ENCODE measurements at regions of chr17 and their contacts with region 1.

Region 1: DNA sequence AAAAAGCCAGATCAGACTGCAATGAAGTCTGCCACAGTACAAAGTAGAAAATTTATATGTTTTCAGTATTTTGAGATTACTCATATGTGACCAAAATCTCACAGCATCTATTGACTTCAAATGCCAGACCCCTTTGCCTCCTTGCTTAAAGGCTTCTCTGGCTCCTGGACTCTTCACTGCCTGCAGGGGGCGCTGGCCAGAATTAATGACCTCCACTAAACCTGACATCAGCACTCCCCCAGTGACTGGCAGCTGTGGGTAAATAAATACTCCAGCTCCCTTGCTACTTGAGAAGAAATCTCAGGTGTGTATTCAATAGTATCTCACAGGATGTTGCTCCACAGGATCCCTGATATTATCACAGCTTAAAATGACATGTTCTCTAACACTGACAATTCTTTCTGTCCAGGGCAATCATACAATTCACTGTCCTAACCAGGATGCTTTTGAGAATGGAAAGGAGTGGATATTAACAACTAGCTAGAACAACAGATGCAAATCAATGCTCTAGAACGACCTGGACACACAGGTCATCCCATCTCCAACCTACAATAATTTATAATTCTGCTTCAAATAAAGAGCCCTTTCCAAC is 4.0 kb downstream of the BECN1 start:
- DNase-seq: peak; percentile 26 to 74 (median 63)
- ATAC-seq: peak; percentile 24
- H3K4me3 ChIP-seq: no peak overlapping the region
- H3K4me3 Mint-ChIP-seq: no peak overlapping the region
- H3K27ac ChIP-seq: no peak overlapping the region
- H3K27ac Mint-ChIP-seq: no peak overlapping the region
- H3K4me1 ChIP-seq: peaks cover 13% of the 10 kb centered on the region
- H3K4me1 Mint-ChIP-seq: peaks cover 34% of the 10 kb centered on the region
- H3K27me3 ChIP-seq: no peaks in the 10 kb centered on the region
- H3K27me3 Mint-ChIP-seq: no peaks in the 10 kb centered on the region
- CTCF ChIP-seq: peak; percentile 73

Region 2: GRCh38 chr17:42720996-42721583 is 99.0 kb before region 1 on chr17:
- CTCF ChIA-PET with region 1: interaction called, 8 read pairs
- POLR2A ChIA-PET with region 1: interaction called, 3 read pairs
- intact Hi-C with region 1: loop called (anchors 1 to 2 kb)
- DNase-seq: peak in 5 of 9 experiments; percentile 17 to 79 (median 41)
- ATAC-seq: peak; percentile 89
- H3K4me3 ChIP-seq: no peak overlapping the region
- H3K4me3 Mint-ChIP-seq: no peak overlapping the region
- H3K27ac ChIP-seq: no peak overlapping the region
- H3K27ac Mint-ChIP-seq: no peak overlapping the region
- H3K4me1 ChIP-seq: no peaks in the 10 kb centered on the region
- H3K4me1 Mint-ChIP-seq: no peaks in the 10 kb centered on the region
- H3K27me3 ChIP-seq: no peaks in the 10 kb centered on the region
- H3K27me3 Mint-ChIP-seq: no peaks in the 10 kb centered on the region
- CTCF ChIP-seq: peak; percentile 66

Region 3: GRCh38 chr17:42744806-42745617 is 75.0 kb before region 1 on chr17 and contains the start of gene EZH1:
- CTCF ChIA-PET with region 1: interaction called, 4 read pairs
- POLR2A ChIA-PET with region 1: no interaction called
- intact Hi-C with region 1: loop called in 1 of 2 experiments (anchors 1 kb)
- DNase-seq: peak; percentile 82 to 96 (median 90)
- ATAC-seq: peak; percentile 92
- H3K4me3 ChIP-seq: peak within 1 kb of the TSS; percentile 72 to 73
- H3K4me3 Mint-ChIP-seq: peak within 1 kb of the TSS; percentile 98
- H3K27ac ChIP-seq: peak within 1 kb of the TSS; percentile 62 to 79
- H3K27ac Mint-ChIP-seq: peak within 1 kb of the TSS; percentile 96
- H3K4me1 ChIP-seq: peaks cover 17% of the 10 kb centered on the region
- H3K4me1 Mint-ChIP-seq: peaks cover 31% of the 10 kb centered on the region
- H3K27me3 ChIP-seq: peaks cover 0 to 4% of the 10 kb centered on the region in 2 experiments
- H3K27me3 Mint-ChIP-seq: peaks cover 13% of the 10 kb centered on the region
- CTCF ChIP-seq: no peak
- total RNA-seq, gene EZH1: 59.2 to 63.4 TPM

Region 4: DNA sequence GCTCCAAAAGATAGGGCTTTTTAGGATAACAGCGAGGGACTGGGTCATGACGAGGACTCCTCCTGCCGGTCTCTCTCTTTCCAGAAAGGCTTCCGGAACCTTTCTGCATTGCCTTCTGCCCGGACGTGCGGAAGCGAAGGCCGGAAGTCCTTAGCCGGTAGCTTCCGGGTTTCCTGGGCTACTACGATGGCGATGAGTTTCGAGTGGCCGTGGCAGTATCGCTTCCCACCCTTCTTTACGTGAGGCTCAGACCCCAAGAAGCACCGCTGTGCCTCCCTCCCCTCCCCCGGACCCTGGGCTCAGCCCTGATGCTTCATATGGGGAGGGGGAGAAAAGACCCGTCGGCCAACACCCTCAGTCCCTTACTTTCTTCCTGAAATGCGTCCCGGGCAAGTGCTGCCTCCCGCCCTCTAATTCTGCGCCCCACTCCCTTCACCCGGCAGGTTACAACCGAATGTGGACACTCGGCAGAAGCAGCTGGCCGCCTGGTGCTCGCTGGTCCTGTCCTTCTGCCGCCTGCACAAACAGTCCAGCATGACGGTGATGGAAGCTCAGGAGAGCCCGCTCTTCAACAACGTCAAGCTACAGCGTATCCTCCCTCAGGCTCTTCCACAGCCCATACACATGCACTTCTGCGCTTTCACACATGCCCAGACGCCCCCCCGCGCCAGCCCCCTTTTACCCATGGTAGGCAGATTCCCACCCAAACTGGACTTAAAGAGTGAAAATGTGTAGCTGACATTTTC is 46.6 kb before region 1 on chr17 and contains the start of gene VPS25:
- CTCF ChIA-PET with region 1: interaction called, 8 read pairs
- POLR2A ChIA-PET with region 1: interaction called, 8 read pairs
- intact Hi-C with region 1: loop called (anchors 1 to 2 kb)
- DNase-seq: peak; percentile 39 to 90 (median 75)
- ATAC-seq: peak; percentile 94
- H3K4me3 ChIP-seq: peak within 1 kb of the TSS; percentile 87 to 99
- H3K4me3 Mint-ChIP-seq: peak within 1 kb of the TSS; percentile 99
- H3K27ac ChIP-seq: peak within 1 kb of the TSS; percentile 89 to 93
- H3K27ac Mint-ChIP-seq: peak within 1 kb of the TSS; percentile 98
- H3K4me1 ChIP-seq: peaks cover 11% of the 10 kb centered on the region
- H3K4me1 Mint-ChIP-seq: peaks cover 28% of the 10 kb centered on the region
- H3K27me3 ChIP-seq: no peaks in the 10 kb centered on the region
- H3K27me3 Mint-ChIP-seq: peaks cover under 1% of the 10 kb centered on the region
- CTCF ChIP-seq: no peak
- total RNA-seq, gene VPS25: 41.0 to 45.1 TPM

Region 5: DNA sequence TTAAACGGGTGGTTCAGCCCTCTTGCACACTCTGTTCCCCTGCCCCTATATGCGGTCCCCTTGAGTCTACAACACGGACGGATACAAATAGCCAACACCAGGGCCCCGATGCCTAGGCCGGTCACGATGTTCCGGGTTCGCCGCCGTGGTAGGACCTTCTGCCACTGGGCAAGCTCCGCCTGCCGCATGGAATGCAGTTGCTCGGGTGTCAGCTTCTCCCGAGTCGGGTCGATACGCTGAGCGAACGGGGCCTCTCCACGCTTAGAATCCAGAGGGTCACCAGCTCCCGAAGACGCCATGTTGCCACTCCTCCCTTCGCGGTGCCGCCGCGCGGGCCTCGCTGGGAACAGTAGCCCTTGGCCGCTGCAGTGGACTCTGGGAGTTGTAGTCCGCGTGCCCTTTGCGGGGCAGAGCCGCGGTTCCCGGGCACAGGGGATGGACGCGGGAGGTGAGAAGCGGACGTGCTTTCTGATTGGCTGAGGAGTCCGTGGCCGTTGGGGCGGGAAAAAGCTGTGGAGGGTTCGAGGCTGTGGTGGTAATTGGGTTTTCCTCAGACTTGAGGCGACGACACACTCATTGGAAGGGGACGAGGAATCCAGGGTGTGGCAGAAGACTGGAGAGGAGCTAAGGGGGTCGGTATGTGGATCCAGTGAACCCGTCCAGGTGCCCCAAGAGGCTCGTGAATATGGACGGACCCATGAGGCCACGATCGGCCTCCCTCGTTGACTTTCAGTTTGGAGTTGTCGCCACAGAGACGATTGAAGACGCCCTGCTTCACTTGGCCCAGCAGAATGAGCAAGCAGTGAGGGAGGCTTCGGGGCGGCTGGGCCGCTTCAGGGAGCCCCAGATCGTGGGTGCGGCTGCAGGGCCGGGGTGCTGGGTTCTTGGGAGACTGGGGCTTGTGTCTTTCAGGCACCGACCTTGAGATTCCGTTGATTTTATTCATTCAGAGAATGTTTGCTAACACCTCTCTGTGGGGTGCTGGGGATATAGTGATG is 21.4 kb before region 1 on chr17 and contains the starts of genes CNTD1 and COA3:
- CTCF ChIA-PET with region 1: interaction called, 4 read pairs
- POLR2A ChIA-PET with region 1: interaction called, 3 read pairs
- intact Hi-C with region 1: loop called in 1 of 2 experiments (anchors 1 kb)
- DNase-seq: peak; percentile 52 to 84 (median 77)
- ATAC-seq: peak; percentile 98
- H3K4me3 ChIP-seq: peak within 1 kb of the TSS; percentile 67 to 75
- H3K4me3 Mint-ChIP-seq: peak within 1 kb of the TSS; percentile 93
- H3K27ac ChIP-seq: peak within 1 kb of the TSS in 1 of 2 experiments; percentile 47
- H3K27ac Mint-ChIP-seq: peak within 1 kb of the TSS; percentile 77
- H3K4me1 ChIP-seq: peaks cover 13% of the 10 kb centered on the region
- H3K4me1 Mint-ChIP-seq: peaks cover 28% of the 10 kb centered on the region
- H3K27me3 ChIP-seq: no peaks in the 10 kb centered on the region
- H3K27me3 Mint-ChIP-seq: no peaks in the 10 kb centered on the region
- CTCF ChIP-seq: no peak
- total RNA-seq, gene CNTD1: not detected
- total RNA-seq, gene COA3: 4.0 to 5.6 TPM

Region 6: DNA sequence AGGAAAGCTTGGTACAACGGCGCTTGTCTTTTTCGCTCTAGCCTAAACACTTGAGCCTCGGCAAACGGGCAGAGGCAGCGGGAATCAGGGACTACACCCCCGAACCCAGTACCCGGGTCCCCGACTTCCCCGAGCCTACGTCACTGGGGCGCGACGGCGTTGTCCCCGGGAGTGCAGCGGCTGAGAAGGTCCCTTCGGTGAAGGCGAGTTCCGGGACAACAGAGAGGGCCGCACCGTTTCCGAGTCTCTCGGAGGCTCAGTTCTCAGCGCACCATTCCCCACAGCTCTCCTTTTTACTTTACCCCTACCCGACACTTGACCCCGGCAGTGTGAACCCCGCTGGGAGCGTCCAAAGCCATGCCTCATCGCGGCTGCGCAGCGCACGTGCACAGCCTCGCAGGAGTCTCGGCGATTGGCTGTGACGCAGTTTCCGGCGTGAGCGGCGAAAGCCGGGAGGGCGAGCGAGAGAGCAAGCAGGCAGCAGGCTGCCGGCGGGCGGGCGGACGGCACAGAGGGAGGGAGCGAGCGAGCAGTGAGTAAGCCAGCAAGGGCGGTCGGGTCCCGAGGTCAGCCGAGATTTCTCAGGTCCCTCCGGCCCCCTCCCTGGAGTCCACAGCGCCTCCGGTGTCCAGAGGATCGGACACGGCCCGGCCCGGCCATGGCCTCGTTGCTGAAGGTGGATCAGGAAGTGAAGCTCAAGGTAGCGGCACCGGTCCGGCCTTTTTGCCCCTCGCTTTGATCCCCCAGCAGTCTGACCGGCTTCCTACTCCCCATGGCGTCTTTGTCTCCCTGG is 13.1 kb after region 1 on chr17 and contains the start of gene PSME3:
- CTCF ChIA-PET with region 1: interaction called, 12 read pairs
- POLR2A ChIA-PET with region 1: interaction called, 29 read pairs
- intact Hi-C with region 1: loop called (anchors 1 kb)
- DNase-seq: peak; percentile 75 to 95 (median 88)
- ATAC-seq: peak; percentile 87
- H3K4me3 ChIP-seq: peak within 1 kb of the TSS; percentile 93 to 100
- H3K4me3 Mint-ChIP-seq: peak within 1 kb of the TSS; percentile 97
- H3K27ac ChIP-seq: peak within 1 kb of the TSS; percentile 95
- H3K27ac Mint-ChIP-seq: peak within 1 kb of the TSS; percentile 99
- H3K4me1 ChIP-seq: peaks cover 17% of the 10 kb centered on the region
- H3K4me1 Mint-ChIP-seq: peaks cover 31% of the 10 kb centered on the region
- H3K27me3 ChIP-seq: no peaks in the 10 kb centered on the region
- H3K27me3 Mint-ChIP-seq: no peaks in the 10 kb centered on the region
- CTCF ChIP-seq: no peak
- total RNA-seq, gene PSME3: 74.1 to 74.2 TPM

Region 7: GRCh38 chr17:42980398-42981397 is 160.7 kb after region 1 on chr17 and contains the start of gene RUNDC1:
- CTCF ChIA-PET with region 1: no interaction called
- POLR2A ChIA-PET with region 1: no interaction called
- intact Hi-C with region 1: loop called (anchors 5 kb)
- DNase-seq: peak; percentile 77 to 95 (median 91)
- ATAC-seq: peak; percentile 86
- H3K4me3 ChIP-seq: peak within 1 kb of the TSS; percentile 66 to 80
- H3K4me3 Mint-ChIP-seq: peak within 1 kb of the TSS; percentile 97
- H3K27ac ChIP-seq: peak within 1 kb of the TSS; percentile 65 to 67
- H3K27ac Mint-ChIP-seq: peak within 1 kb of the TSS; percentile 97
- H3K4me1 ChIP-seq: peaks cover 20% of the 10 kb centered on the region
- H3K4me1 Mint-ChIP-seq: peaks cover 41% of the 10 kb centered on the region
- H3K27me3 ChIP-seq: no peaks in the 10 kb centered on the region
- H3K27me3 Mint-ChIP-seq: no peaks in the 10 kb centered on the region
- CTCF ChIP-seq: peak; percentile 50
- total RNA-seq, gene RUNDC1: 19.2 to 19.4 TPM